Mammary epithelial cell (primary cell): ENCODE measurements at regions of chr2 and their contacts with region 1.

Region 1: DNA sequence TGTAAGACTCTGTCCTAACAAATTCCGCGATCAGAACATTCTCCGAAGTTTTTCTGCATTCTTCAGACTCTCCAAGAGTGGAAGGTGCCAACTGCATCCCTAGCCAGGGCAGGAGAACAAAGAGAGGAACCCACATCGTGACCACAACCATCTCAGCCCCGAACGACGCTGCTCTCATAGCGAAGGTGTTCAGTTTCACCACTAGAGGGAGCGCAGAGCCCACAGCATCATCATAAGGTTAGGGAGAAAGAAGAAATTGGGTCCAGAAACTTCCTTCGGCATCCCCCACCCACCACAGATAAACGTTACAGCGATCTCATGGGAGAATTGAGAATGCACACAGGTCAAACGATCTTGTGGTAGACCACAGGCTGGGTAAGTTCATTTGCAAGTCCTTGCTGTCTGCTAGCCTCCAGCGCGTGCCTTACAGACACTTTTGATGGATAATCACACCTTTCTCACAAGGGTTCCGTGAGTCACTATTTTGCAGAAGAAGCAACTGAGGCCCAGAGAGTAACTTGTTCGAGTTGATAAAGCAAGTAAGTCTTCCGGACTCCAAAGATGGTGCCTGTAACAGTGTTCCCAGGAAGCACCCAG is 53.7 kb upstream of the ARL4C start:
- DNase-seq: peak; percentile 62
- H3K4me3 ChIP-seq: no peak overlapping the region
- H3K27ac ChIP-seq: no peak overlapping the region
- H3K4me1 ChIP-seq: peaks cover 5% of the 10 kb centered on the region
- H3K27me3 ChIP-seq: no peaks in the 10 kb centered on the region
- CTCF ChIP-seq: peak; percentile 90 to 96

Region 2: DNA sequence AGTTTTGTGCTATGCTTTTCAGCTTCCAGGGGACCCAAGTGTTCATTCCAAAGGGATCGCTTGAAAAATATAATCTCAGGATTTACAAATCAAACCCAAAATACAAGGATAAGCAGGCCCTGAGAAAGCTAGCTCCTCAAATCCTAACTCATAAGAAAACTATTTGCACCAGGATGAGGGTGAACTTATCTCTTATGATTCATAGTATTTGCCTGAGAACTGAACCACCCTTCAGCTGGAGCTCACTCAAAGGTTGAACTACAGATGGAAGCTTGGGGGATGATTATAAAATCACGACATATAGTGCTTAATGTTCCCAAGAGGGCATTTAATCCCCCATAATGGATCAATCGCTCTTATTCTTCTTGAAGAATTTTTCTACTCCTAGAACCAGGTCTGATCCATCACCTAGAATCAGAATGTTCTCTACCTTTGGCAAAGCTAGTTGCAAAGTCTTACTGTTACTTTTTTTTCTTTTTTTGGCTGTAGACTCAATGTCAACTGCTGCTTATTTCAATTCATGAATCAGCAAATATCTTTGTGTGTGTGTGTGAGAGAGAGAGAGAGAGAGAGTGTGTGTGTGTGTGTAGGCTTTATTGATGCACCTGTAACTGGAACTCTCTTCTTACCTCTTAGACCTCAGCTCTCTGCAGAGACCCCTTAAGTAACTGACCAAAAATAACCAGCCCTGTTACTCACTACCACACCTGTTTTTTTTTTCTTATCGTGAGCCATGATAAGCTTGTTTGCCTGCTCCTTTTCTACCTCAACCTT is 98.6 kb before region 1 on chr2:
- CTCF ChIA-PET with region 1: no interaction called
- dilution Hi-C with region 1: no loop called
- in situ Hi-C with region 1: no loop called
- intact Hi-C with region 1: no loop called
- DNase-seq: peak; percentile 61
- H3K4me3 ChIP-seq: no peak overlapping the region
- H3K27ac ChIP-seq: peak overlapping the region; percentile 49
- H3K4me1 ChIP-seq: peaks cover 40% of the 10 kb centered on the region
- H3K27me3 ChIP-seq: no peaks in the 10 kb centered on the region
- CTCF ChIP-seq: no peak

Region 3: DNA sequence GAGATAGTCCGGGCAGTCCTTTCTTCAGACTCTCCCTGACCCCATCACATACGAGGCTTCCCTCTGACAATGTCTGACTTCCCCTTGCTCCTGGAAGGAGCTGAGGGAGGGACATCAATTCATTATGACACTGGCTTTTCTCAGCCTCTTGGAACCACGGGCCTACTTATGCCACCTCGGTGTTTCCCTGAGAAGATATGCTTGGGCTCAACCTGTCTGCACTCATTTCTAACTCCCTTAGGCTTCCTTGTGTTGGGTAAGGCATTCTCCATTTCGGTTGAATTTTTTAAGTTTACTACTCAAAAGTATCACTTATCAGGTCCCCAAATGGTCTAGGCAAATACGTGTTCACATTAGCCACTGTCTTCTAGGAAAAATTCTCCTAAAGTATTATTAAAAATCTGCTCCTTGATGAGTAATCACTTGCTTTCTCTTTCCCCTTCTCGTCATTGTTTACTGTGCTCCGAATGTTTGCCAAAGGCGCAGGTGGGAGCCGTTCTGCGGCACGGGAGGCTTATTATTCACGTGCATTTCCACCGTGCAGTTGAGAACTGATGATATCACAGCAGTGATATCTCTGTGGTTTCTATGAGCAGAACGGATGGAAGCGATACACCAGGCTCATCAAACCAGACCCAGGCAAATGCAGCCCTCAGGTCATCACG is 86.9 kb before region 1 on chr2:
- CTCF ChIA-PET with region 1: no interaction called
- dilution Hi-C with region 1: no loop called
- in situ Hi-C with region 1: no loop called
- intact Hi-C with region 1: no loop called
- DNase-seq: no peak
- H3K4me3 ChIP-seq: no peak overlapping the region
- H3K27ac ChIP-seq: no peak overlapping the region
- H3K4me1 ChIP-seq: peaks cover 13% of the 10 kb centered on the region
- H3K27me3 ChIP-seq: no peaks in the 10 kb centered on the region
- CTCF ChIP-seq: no peak

Region 4: DNA sequence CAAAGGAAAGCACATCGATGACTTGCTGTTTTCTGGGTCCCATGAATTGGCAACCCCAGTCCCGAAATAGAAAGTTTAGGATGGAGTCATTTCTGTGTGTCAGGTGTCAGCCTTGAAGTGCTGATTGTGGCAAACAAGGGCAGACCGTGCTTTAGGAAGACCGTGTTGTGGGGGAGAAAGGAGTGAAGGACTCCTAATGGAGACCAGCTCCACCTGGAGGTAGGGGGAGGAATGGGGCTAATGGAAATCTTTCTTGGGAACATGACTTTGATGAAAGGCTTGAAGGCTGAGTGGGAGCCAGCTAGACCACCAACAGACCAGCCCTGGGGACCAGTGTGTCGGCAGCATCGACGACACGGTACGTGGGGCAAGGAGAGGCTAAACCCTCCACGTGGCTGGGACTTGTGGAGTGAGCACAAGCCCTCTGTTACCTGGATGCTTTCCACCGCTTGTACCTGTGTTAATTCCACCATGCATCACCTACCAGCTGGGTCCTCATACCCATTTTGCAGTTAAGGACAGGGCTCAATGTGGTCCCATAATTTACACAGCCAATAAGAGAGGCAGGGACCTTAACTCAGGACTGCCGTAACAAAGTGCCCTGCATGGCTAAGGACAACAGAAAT is 505.4 kb after region 1 on chr2:
- CTCF ChIA-PET with region 1: no interaction called
- dilution Hi-C with region 1: no loop called
- in situ Hi-C with region 1: no loop called
- intact Hi-C with region 1: loop called (anchors 2 kb)
- DNase-seq: peak; percentile 30
- H3K4me3 ChIP-seq: no peak overlapping the region
- H3K27ac ChIP-seq: no peak overlapping the region
- H3K4me1 ChIP-seq: peaks cover under 1% of the 10 kb centered on the region
- H3K27me3 ChIP-seq: no peaks in the 10 kb centered on the region
- CTCF ChIP-seq: peak; percentile 77 to 90

Region 5: DNA sequence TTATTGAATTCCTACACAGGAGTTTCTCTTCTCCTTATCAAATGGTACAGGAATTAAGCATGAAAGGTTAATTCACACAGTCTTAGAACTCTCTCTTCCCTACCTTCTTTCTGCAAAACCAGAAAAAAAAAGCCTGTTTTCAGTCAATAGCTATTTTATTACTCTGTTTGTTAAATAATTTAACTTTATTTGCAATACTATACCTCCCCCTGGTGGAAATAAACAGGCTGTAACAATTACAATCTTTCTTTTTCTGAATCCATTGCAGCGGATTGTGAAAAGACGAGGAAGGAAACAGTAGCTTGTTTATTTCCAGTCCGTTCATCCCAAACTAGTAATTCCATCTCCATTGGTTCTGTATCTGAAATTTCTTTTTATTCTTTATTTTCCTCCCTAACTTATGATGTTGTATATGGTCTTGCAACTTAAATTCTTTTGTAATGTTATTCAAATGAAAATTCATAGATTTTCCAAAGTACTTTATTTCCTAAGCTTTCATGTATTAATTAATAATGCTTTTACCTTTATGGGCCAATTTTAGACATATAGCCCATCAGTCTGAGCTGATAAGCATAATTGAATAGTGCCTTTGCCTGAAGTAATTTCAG is 566.4 kb after region 1 on chr2:
- CTCF ChIA-PET with region 1: interaction called, 3 read pairs
- dilution Hi-C with region 1: loop called (anchors 5 kb)
- in situ Hi-C with region 1: loop called in 1 of 2 experiments (anchors 5 kb)
- intact Hi-C with region 1: loop called (anchors 1 kb)
- DNase-seq: peak; percentile 24
- H3K4me3 ChIP-seq: no peak overlapping the region
- H3K27ac ChIP-seq: no peak overlapping the region
- H3K4me1 ChIP-seq: no peaks in the 10 kb centered on the region
- H3K27me3 ChIP-seq: no peaks in the 10 kb centered on the region
- CTCF ChIP-seq: peak; percentile 58 to 66